Activated naive CD4-positive, alpha-beta T cell treated with anti-CD3 and anti-CD28 coated beads for 36 hours (primary cell): ENCODE measurements at regions of chr14 and their contacts with region 1.

Region 1: DNA sequence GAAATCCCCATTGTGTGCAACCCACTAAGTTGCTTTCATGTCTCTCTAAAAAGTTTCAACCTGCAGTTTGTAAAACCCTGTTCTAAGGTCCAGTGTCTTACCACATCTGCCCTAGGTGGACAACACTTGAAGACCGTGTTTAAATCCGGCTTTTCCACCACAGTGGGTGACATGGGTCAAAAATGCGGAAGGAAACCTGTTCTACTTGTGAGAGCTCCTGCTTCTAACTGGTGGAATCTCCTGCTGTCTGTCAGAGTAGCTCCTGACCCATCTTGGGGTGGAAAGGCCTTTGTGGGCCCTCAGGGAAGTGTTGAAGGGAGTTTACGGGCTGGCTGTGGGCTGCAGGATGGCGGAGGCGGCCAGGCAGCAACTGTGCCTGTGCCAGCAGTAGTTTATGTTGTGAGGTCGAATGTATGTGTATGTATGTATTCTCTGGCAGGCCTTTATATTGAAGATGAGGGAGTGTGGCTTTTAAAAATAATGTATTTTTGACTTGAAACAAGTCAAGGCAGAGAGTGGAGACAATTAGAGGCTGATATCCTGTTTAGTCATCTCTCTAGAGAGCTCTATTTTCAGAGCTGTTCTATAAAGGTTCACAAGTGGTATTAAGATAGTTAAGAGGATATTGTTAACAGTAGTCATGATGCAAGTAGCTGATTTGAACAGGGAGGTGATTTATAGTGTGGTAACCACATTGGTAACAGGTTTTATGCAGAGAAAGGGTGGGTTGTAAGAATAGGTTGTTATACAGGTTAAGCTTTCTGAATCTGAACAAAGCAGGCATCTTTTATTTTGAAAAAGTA is 67.0 kb downstream of the PRKCH start:
- DNase-seq: peak; percentile 50
- H3K4me3 Mint-ChIP-seq: no peak overlapping the region
- H3K27ac Mint-ChIP-seq: no peak overlapping the region
- H3K4me1 Mint-ChIP-seq: peaks cover 23% of the 10 kb centered on the region
- H3K27me3 Mint-ChIP-seq: no peaks in the 10 kb centered on the region

Region 2: DNA sequence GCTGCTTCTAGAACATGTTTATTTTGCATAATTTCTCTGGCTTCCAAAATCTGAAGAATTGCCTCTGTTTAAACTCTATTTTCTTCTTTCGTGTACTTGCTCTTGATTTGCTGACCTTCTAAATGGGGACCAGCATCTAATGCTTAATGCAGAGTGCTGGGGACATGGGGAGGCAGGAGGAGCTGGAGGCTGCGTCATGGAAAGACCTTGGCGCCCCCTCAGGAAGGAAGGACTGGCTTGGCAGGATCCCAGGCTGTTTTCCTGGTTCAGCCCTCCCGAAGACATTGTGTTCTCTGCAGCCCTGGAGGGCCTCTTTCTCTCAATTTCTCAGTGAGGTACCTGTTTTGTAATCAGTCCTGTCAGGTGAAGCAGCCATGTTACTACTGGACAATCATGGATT is 61.5 kb before region 1 on chr14:
- CTCF ChIA-PET with region 1: interaction called, 3 read pairs
- intact Hi-C with region 1: loop called (anchors 1 kb)
- DNase-seq: no peak
- H3K4me3 Mint-ChIP-seq: peak overlapping the region; percentile 63
- H3K27ac Mint-ChIP-seq: peak overlapping the region; percentile 95
- H3K4me1 Mint-ChIP-seq: peaks cover 70% of the 10 kb centered on the region
- H3K27me3 Mint-ChIP-seq: no peaks in the 10 kb centered on the region

Region 3: DNA sequence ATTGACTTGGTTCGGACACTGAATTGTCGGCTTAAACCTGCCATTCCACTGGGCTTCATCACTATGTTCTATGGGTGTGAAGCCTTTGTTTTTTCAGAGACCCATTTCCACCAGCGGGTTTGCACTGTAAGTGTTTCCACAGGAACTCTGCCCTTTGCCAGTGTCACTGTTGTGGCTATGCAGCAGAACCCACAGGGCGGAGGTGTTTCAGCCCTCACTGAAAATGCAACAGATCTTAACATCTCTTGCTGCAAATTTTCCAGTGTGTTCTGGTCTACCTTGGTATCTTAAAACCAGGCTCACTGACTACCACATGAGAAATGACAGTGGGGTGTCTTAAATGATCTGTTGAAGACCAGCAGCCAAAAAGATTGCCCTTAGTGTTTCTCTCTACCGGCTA is 45.9 kb before region 1 on chr14:
- CTCF ChIA-PET with region 1: interaction called, 15 read pairs
- intact Hi-C with region 1: loop called (anchors 1 kb)
- DNase-seq: peak; percentile 86
- H3K4me3 Mint-ChIP-seq: peak overlapping the region; percentile 66
- H3K27ac Mint-ChIP-seq: peak overlapping the region; percentile 97
- H3K4me1 Mint-ChIP-seq: peaks cover 96% of the 10 kb centered on the region
- H3K27me3 Mint-ChIP-seq: no peaks in the 10 kb centered on the region

Region 4: DNA sequence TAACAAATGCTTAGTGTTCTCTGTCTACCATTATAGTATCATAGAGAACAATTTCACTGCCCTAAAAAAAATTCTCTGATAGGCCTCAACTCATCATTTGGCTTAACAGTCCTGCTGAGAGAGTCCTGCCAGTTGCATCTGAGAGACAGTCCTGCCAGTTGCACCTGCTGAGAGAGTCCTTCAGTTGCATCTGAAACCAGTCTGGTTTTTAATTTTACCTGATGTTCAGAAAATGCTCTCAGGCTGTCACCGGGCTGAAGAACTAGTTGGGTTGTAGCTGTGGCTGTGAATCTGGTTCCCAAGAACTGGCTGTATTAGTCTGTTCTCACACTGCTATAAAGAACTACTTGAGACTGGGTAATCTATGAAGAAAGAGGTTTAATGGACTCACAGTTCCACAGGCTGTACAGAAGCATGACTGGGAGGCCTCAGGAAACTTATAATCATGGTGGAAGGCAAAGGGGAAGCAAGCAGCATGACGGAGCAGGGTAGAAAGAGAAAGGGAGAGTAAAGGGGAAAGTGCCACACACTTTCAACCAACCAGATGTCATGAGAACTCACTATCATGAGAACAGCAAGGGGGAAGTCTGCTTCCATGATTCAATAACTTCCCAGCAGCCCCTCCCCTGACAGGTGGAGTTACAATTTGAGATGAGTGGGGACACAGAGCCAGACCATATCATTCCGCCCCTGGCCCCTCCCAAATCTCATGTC is 15.4 kb before region 1 on chr14:
- CTCF ChIA-PET with region 1: interaction called, 5 read pairs
- intact Hi-C with region 1: loop called (anchors 1 kb)
- DNase-seq: peak; percentile 45
- H3K4me3 Mint-ChIP-seq: no peak overlapping the region
- H3K27ac Mint-ChIP-seq: peak overlapping the region; percentile 84
- H3K4me1 Mint-ChIP-seq: peaks cover 87% of the 10 kb centered on the region
- H3K27me3 Mint-ChIP-seq: no peaks in the 10 kb centered on the region

Region 5: GRCh38 chr14:61418746-61419145 is 30.4 kb after region 1 on chr14:
- CTCF ChIA-PET with region 1: interaction called, 4 read pairs
- intact Hi-C with region 1: loop called (anchors 1 kb)
- DNase-seq: no peak
- H3K4me3 Mint-ChIP-seq: no peak overlapping the region
- H3K27ac Mint-ChIP-seq: peak overlapping the region; percentile 51
- H3K4me1 Mint-ChIP-seq: peaks cover 60% of the 10 kb centered on the region
- H3K27me3 Mint-ChIP-seq: no peaks in the 10 kb centered on the region

Region 6: DNA sequence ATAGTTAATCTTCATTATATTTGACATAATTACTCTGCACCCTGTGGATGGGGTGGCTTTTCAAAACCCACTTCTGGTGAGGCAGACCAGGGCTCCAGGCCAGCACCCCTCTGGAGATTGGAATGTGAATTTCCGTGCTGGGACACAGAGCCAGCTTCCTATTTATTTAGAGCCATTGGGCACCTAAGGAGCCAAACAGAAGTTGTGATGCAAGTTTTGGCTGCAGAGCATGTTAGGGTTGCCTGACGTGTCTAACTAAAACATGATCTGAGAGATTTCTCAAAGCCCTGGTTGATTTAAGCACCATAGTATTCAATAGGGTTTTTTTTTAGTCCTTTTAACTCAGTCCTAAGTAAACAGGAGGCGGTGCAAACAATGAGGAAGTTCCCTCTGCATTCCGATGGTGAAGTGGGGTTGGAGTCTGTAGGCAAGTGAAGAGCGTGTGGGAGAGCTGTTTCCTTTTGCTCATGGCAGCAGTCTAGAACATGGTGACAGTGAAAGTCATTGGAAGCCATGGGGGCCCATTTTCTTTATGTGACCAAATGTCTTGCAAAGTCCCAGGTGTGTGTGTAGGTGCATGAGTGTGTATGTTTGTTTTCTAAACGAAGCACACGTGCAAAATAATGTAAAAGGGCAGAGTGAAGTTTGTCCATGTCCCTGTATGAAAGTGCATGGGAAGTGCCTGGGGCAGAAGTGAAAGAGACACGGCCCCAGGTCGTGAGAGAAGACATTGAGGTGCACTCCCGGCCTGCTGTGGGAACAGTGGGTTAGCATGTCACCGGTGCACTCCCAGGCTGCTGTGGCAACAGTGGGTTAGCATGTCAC is 50.7 kb after region 1 on chr14:
- CTCF ChIA-PET with region 1: interaction called, 3 read pairs
- intact Hi-C with region 1: loop called (anchors 1 kb)
- DNase-seq: peak; percentile 60
- H3K4me3 Mint-ChIP-seq: peak overlapping the region; percentile 63
- H3K27ac Mint-ChIP-seq: peak overlapping the region; percentile 84
- H3K4me1 Mint-ChIP-seq: peaks cover 93% of the 10 kb centered on the region
- H3K27me3 Mint-ChIP-seq: no peaks in the 10 kb centered on the region

Region 7: DNA sequence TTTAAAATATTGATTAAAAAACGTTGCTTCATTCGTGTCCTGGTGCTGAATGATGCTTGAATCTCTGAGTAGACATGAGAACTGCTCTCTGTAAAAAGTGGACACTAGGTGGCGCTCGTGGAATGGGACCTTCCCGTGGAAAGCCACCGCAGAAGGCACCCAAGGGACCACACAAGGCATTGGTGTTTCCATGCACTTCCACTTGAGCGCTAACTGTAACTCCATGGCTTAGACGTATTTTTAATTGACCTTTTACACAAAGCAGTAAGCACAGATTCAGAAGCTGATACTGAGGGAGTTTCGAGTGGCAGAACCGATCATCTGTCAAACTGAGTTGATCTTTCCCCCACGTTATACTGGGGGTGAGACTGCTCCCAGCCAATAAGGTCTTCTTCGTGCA is 68.3 kb after region 1 on chr14:
- CTCF ChIA-PET with region 1: interaction called, 6 read pairs
- intact Hi-C with region 1: loop called (anchors 1 kb)
- DNase-seq: peak; percentile 94
- H3K4me3 Mint-ChIP-seq: no peak overlapping the region
- H3K27ac Mint-ChIP-seq: peak overlapping the region; percentile 66
- H3K4me1 Mint-ChIP-seq: peaks cover 82% of the 10 kb centered on the region
- H3K27me3 Mint-ChIP-seq: no peaks in the 10 kb centered on the region